Right ventricle myocardium superior (tissue), 1 donor: ENCODE measurements at regions of chr19 and their contacts with region 1.

Region 1: GRCh38 chr19:38315657-38316476 is at the start of gene YIF1B:
- DNase-seq: peak; percentile 98
- ATAC-seq: peak; percentile 96
- total RNA-seq, gene YIF1B: 31.3 TPM

Region 2: DNA sequence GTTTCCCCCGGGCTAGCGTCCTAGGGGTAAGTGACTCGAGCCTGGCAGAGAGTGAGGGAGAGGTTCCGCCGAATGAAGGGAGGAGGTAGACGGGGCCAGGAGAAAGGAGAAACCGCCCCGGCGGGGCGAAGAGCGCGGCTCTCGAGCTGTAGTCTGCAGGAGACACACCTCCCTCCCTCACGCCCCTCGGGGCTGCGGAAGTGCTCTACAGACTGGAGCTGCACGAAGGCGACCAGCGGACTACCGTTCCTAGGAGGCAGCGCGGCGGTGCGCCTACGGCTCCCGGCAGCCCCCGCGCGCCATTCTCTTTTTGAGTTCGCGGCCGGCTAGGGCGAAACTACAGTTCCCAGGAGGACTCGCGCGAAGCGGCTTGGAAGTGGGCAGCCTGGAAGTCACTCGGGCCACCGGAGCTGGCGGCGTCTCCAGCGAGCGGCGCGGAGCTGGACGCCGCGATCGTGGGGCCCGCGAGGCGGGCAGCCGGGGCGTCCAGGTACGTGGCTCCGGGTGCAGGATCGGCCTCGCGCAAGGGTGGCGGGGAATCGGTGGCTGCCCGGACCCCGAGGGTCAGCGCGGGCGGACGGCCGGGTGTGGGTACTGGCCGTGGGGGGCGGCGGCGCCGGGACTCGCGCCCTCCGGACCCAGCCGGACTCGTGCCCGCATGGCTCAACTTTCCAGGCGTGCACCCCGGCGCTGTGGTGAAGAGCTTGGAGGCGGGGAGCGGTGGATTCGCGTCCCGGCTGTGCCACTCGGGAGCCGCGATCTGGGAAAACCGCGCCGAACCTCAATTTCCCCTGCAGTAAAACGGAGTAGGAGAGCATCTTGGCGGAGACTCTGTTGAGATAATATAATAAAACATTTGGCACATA is 408.8 kb before region 1 on chr19 and contains the start of gene SIPA1L3:
- intact Hi-C with region 1: loop called (anchors 10 kb)
- DNase-seq: peak; percentile 97
- ATAC-seq: peak; percentile 99
- total RNA-seq, gene SIPA1L3: 8.5 TPM

Region 3: GRCh38 chr19:38263689-38264485 is 52.0 kb before region 1 on chr19:
- intact Hi-C with region 1: loop called (anchors 5 kb)
- DNase-seq: no peak
- ATAC-seq: peak; percentile 82

Region 4: GRCh38 chr19:38277969-38278680 is 37.7 kb before region 1 on chr19:
- intact Hi-C with region 1: loop called (anchors 5 kb)
- DNase-seq: peak; percentile 81
- ATAC-seq: peak; percentile 85

Region 5: DNA sequence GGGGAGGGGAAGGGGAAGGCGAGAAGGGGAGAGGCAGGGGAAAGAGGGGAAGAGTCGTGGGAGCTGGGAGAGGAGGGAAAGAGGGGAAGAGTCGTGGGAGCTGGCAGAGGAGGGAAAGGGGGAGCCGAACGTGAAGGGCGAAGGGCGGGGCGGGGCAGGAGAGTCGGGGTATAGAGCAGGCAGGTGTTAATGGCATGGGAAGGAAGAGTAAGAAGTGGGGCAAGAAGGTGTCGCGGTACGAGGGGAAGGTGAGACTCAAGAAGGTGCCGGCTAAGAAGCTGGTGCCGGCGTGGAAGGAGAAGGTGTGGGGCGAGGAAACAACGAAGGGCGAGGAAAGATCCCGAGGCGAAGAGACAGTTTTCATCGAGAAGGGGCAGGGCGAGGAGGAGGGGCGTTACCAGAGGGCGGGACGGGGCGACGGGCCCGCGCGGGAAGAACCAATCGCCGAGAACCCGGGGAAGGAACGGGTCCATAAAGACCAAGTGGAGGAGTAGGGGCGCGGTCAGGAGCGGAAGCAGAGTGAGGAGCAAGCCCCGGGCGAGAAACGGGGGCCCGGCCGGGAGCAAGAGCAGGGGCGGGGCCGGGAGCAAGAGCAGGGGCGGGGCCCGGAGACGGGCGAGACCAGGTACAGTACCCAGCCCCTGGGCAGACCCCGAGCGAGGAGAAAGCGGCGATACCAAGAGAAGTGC is 20.2 kb after region 1 on chr19:
- intact Hi-C with region 1: no loop called
- DNase-seq: peak; percentile 97
- ATAC-seq: peak; percentile 95